Activated CD4-positive, alpha-beta memory T cell treated with anti-CD3 and anti-CD28 coated beads for 36 hours (primary cell): ENCODE measurements at regions of chr19 and their contacts with region 1.

Region 1: GRCh38 chr19:32691291-32691951 is at the start of gene NUDT19:
- DNase-seq: peak; percentile 90
- H3K4me3 Mint-ChIP-seq: peak within 1 kb of the TSS; percentile 90
- H3K27ac Mint-ChIP-seq: peak within 1 kb of the TSS; percentile 87
- H3K4me1 Mint-ChIP-seq: peaks cover 47% of the 10 kb centered on the region
- H3K27me3 Mint-ChIP-seq: no peaks in the 10 kb centered on the region
- total RNA-seq, gene NUDT19: 14.9 to 15.0 TPM

Region 2: DNA sequence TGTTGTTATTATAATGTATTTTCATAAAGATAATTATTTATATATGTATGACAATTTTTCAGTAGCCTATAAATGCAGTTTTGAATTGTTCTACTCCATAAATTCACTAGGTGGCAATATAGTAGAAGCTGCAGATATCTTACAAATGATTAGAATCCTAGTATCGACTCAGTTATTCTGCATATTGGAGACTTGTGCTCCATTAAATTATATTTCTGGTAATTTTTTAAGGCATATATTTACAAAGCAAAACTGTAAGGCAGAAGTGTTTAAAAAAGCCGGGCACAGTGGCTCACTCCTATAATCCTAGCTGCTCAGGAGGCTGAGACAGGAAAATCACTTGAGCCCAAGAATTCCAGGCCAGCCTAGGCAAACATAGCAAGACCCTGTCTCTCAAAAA is 227.1 kb before region 1 on chr19:
- CTCF ChIA-PET with region 1: no interaction called
- POLR2A ChIA-PET with region 1: no interaction called
- intact Hi-C with region 1: no loop called
- DNase-seq: no peak
- H3K4me3 Mint-ChIP-seq: no peak overlapping the region
- H3K27ac Mint-ChIP-seq: no peak overlapping the region
- H3K4me1 Mint-ChIP-seq: peaks cover 4% of the 10 kb centered on the region
- H3K27me3 Mint-ChIP-seq: no peaks in the 10 kb centered on the region

Region 3: GRCh38 chr19:32674959-32675719 is 16.3 kb before region 1 on chr19 and contains the start of gene ANKRD27:
- CTCF ChIA-PET with region 1: interaction called, 6 read pairs
- POLR2A ChIA-PET with region 1: interaction called, 6 read pairs
- intact Hi-C with region 1: loop called (anchors 1 kb)
- DNase-seq: peak; percentile 98
- H3K4me3 Mint-ChIP-seq: peak within 1 kb of the TSS; percentile 92
- H3K27ac Mint-ChIP-seq: peak within 1 kb of the TSS; percentile 67
- H3K4me1 Mint-ChIP-seq: peaks cover 28% of the 10 kb centered on the region
- H3K27me3 Mint-ChIP-seq: peaks cover 11% of the 10 kb centered on the region
- total RNA-seq, gene ANKRD27: 39.7 to 45.4 TPM

Region 4: DNA sequence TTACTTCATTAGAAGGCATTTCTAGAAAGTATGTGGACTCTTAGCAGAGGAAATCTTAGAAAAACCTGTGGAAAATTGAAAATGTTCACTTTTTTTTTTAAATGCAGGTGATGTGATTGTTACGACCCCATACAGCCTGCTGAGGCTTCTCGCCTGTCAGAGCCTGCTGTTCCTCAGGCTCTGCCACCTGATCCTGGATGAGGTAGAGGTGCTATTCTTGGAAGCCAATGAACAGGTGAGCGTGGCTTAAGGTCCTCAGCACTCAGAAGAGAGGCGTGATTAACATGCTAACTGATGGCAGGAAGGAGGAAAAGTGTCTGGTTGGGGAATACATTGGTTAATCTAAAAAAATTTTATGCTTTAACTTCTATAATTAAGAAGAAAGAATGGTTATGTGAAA is 106.8 kb after region 1 on chr19:
- CTCF ChIA-PET with region 1: no interaction called
- POLR2A ChIA-PET with region 1: no interaction called
- intact Hi-C with region 1: loop called (anchors 5 kb)
- DNase-seq: no peak
- H3K4me3 Mint-ChIP-seq: no peak overlapping the region
- H3K27ac Mint-ChIP-seq: no peak overlapping the region
- H3K4me1 Mint-ChIP-seq: peaks cover 28% of the 10 kb centered on the region
- H3K27me3 Mint-ChIP-seq: no peaks in the 10 kb centered on the region

Region 5: DNA sequence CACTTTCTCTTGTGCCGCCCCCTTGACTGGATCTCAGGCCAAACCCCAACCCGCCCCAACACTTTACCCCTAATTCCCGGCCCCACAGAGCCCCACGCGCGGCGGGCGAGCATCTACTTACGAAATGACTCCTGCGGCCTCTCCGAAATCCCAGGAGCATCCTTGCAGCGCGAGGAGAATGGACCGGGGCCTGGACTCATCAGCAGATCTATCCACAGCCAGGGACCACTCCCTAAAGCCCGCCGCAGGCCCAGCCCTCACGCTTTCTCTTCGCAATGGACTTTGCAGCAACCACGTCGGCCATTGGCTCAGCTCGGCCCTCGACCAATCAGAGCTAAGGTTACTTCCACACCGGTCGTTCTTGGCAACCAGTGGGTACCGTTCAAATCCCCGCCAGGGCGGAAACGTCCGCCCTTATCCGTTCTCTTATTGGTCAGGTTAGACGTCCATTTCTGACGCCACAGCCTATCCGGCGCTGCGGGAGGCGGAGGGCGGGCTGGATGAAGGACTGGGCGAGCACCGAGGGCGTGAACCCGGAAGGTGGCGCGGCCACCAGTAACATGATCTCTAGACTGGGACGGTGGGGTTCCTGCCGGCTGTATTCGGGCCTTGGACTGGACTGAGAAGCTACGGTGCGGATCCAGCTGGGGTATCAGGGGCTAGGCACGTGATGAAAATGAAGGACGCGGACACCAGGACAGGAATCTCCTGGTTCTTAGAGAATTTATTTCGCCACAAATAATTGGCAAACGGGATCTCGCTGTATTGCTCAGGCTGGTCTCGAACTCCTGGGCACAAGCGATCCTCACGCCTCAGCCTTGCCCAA is 280.5 kb after region 1 on chr19 and contains the starts of genes CEP89 and FAAP24:
- CTCF ChIA-PET with region 1: interaction called, 4 read pairs
- POLR2A ChIA-PET with region 1: no interaction called
- intact Hi-C with region 1: loop called (anchors 1 kb)
- DNase-seq: peak; percentile 99
- H3K4me3 Mint-ChIP-seq: peak within 1 kb of the TSS; percentile 99
- H3K27ac Mint-ChIP-seq: peak within 1 kb of the TSS; percentile 84
- H3K4me1 Mint-ChIP-seq: peaks cover 17% of the 10 kb centered on the region
- H3K27me3 Mint-ChIP-seq: no peaks in the 10 kb centered on the region
- total RNA-seq, gene CEP89: 15.6 to 21.0 TPM
- total RNA-seq, gene FAAP24: 8.1 to 8.3 TPM

Region 6: DNA sequence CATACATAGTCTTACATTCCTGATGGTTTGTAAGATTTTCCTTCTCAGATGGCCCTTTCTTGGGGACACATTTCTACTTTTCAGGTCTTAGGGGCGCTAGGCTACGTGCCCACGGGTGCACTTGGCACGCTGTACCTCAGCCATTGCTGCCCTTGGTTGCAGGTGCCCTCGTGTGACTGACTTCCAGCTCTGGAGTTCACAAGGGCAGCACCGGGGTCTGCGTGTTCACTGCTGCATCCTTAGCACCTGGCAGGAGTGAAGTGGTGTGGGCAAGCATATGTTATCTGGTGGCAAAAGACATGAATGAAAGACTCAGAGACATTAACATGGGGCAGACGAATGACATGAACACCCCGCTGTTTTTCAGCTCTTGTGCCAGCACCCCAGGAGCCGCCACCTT is 427.2 kb after region 1 on chr19:
- CTCF ChIA-PET with region 1: no interaction called
- POLR2A ChIA-PET with region 1: no interaction called
- intact Hi-C with region 1: loop called (anchors 1 kb)
- DNase-seq: no peak
- H3K4me3 Mint-ChIP-seq: no peak overlapping the region
- H3K27ac Mint-ChIP-seq: no peak overlapping the region
- H3K4me1 Mint-ChIP-seq: no peaks in the 10 kb centered on the region
- H3K27me3 Mint-ChIP-seq: no peaks in the 10 kb centered on the region